ENCODE measurements at regions of chr1 and their contacts with region 1.

Region 1: DNA sequence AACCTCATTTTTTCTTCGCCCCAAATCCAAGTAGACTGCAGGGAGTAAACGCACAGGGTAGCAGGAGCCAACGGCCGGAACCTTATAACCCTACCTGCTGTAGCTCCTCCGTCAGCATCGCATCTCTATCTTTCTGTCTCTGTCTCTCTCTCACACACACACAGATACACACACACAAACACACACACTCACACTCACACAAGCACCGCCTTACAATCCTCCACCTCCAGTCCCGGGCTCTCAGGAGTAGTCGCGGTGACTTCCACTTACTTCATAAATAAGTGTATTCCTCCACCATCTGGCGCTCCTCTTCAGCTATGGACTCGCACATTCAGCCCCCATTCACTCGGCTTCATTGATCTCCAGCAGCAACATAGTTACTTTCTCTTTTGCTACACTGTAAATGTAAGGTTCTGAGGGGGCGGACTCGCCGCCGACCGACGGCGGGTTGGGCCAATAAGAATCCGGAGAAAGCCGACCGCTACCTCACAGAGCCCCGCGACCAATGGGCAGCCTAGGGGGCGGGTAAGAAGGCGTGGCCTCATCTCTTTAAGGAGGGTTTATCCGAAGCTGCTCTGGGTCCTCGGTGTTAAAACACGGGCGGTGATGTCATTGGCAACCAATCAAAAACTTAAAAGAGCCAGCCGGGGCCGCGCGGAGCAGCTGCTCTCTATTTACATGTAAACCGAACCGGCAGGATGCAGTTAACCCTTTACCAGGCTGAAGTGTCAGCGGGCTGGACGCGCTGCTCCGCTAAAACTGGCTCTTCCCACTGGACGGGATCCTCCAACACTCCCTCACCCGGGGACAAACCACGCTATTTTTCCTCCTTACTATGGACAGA is at the start of gene DUSP10:
- DNase-seq: peak; percentile 100
- H3K4me3 Mint-ChIP-seq: no peak within 1 kb of the TSS
- H3K27ac Mint-ChIP-seq: no peak within 1 kb of the TSS
- H3K4me1 Mint-ChIP-seq: peaks cover 34% of the 10 kb centered on the region
- H3K27me3 Mint-ChIP-seq: no peaks in the 10 kb centered on the region
- total RNA-seq, gene DUSP10: 13.5 and 14.6 TPM in 2 replicates

Region 2: GRCh38 chr1:221435504-221435904 is 306.4 kb before region 1 on chr1:
- intact Hi-C with region 1: loop called (anchors 2 kb)
- DNase-seq: peak; percentile 67
- H3K4me3 Mint-ChIP-seq: no peak overlapping the region
- H3K27ac Mint-ChIP-seq: no peak overlapping the region
- H3K4me1 Mint-ChIP-seq: peaks cover 22% of the 10 kb centered on the region
- H3K27me3 Mint-ChIP-seq: peaks cover 11% of the 10 kb centered on the region

Region 3: GRCh38 chr1:221573756-221574155 is 168.2 kb before region 1 on chr1:
- intact Hi-C with region 1: no loop called
- DNase-seq: no peak
- H3K4me3 Mint-ChIP-seq: no peak overlapping the region
- H3K27ac Mint-ChIP-seq: no peak overlapping the region
- H3K4me1 Mint-ChIP-seq: no peaks in the 10 kb centered on the region
- H3K27me3 Mint-ChIP-seq: peaks cover 7% of the 10 kb centered on the region

Region 4: DNA sequence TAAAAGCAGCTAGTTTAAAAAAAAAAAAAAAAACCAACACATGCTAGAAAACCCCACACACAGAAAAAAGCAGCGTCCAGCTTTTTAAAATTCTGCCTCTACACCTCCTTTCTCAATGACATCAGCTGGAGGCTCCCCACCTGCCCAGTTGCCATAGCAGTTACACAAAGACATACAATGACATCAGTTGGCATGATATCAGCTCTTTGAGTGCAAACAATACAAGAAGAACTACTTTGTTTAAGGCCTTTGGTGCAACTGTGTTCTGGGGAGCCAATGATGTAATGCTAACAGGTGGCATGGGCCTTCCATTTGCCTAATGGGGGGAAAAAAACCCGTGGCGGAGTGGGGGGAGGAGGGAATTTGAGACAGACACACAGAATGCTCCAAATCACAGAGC is 32.9 kb before region 1 on chr1:
- intact Hi-C with region 1: loop called (anchors 1 kb)
- DNase-seq: peak; percentile 85
- H3K4me3 Mint-ChIP-seq: peak overlapping the region; percentile 28
- H3K27ac Mint-ChIP-seq: peak overlapping the region; percentile 90
- H3K4me1 Mint-ChIP-seq: peaks cover 63% of the 10 kb centered on the region
- H3K27me3 Mint-ChIP-seq: no peaks in the 10 kb centered on the region

Region 5: DNA sequence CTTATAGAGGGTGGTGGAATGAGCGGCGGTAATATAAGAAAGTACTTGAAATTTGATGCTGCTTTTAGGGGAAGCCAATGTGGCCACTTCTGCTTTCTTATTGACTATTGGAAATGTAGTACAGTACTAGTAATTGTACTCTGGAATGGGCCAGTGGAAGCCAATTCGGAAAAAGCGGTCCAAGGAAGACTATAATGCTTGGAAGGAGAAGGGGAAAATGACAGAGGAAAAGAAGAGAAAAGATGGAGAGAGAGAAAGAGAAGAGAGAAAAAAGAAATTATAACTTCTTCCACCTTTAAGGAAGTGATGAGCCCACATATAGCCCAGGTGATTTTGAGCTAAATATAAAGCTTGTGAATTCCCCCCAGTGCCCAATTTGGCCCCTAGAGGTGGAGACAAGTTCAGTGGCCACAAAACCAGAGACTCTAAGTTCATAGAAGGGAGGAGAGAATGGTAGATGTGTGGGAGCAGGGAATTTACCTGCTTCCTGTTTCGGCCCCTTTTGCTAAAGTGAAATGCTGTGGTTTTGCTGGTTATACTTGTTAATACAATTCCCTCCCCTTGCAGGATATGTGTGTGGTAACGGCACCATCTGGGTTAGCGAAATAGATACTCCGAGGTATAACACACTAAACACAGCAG is 35.6 kb after region 1 on chr1:
- intact Hi-C with region 1: loop called (anchors 1 kb)
- DNase-seq: peak; percentile 87
- H3K4me3 Mint-ChIP-seq: peak overlapping the region; percentile 68
- H3K27ac Mint-ChIP-seq: peak overlapping the region; percentile 90
- H3K4me1 Mint-ChIP-seq: peaks cover 79% of the 10 kb centered on the region
- H3K27me3 Mint-ChIP-seq: no peaks in the 10 kb centered on the region

Region 6: DNA sequence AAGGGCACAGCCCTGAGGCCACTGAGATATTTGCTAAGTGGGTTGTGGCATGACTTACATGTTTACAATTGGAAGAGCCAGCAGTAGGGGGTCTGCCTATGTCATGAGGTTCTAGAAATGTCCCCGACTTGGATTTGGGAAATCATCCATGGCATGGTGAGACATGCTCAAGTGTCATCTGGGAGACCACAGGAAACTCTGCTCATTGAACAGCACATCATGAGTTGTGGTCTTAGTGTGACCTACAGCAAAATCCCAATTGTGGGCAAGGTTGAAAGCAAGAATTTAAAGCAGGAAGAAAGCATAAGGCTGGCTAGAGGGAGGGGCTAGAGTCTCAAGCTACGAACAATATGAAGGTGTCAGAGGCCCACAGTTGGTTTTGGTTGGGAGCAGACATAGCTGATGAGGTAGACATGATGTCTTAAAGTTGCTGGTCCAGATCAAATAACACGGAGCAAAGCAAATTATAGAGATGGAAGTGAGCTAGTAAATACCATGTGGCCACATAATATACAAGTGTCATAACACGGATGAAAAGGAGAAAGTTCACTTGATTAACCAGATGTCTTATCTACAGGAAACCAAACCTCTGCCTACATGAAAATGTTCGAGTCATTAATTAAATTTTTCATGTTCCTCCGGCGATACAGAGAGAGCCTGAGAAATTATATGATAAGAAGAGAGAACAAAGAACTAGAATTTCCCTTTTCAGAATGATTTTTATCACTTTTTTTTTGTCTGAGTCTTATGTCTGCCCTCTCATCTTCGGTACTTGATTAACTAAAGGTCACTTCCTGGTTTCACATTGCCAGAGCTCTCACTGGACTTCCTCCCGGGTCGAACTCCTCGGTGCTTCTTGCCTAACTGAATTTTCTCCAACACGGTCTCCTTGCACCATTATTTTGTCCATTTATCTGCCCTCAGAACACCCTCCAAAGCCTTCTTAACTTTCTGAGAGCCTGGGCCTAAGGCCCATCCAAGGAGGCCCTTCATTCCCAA is 67.4 kb after region 1 on chr1:
- intact Hi-C with region 1: no loop called
- DNase-seq: peak; percentile 54
- H3K4me3 Mint-ChIP-seq: peak overlapping the region; percentile 6
- H3K27ac Mint-ChIP-seq: peak overlapping the region; percentile 67
- H3K4me1 Mint-ChIP-seq: peaks cover 32% of the 10 kb centered on the region
- H3K27me3 Mint-ChIP-seq: no peaks in the 10 kb centered on the region

Region 7: GRCh38 chr1:221839796-221840395 is 98.0 kb after region 1 on chr1:
- intact Hi-C with region 1: loop called (anchors 1 kb)
- DNase-seq: peak; percentile 79
- H3K4me3 Mint-ChIP-seq: no peak overlapping the region
- H3K27ac Mint-ChIP-seq: peak overlapping the region; percentile 80
- H3K4me1 Mint-ChIP-seq: peaks cover 49% of the 10 kb centered on the region
- H3K27me3 Mint-ChIP-seq: no peaks in the 10 kb centered on the region

Region 8: DNA sequence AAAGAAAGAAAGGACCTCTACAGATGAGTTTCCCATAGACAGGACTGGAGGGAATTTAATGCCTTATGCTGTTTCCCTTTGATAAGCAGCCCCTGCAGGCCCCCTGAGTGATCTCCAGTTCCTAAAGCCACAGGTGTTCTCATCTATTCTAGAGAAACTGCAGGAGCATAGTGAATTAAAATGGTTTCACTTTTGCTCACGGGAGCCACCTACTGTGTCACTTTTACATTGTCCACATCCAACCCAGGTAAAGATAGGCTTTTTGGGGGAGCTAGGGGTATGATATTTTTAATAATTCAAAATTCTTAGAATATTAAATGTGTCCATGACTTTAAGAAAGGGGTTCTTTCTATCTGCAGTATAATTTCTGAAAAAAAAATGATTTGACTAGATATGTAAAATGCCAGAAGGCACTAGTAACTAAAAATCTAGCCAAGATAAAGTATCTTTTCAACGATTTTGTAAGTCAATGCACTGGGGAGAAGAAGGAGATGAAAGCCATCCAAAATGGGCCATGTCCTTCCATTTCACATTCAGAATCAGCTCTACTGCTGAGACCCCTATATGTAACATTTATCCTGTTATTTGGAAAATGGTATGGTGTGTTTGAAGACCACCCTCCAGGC is 267.3 kb after region 1 on chr1:
- intact Hi-C with region 1: loop called (anchors 1 kb)
- DNase-seq: peak; percentile 79
- H3K4me3 Mint-ChIP-seq: no peak overlapping the region
- H3K27ac Mint-ChIP-seq: no peak overlapping the region
- H3K4me1 Mint-ChIP-seq: no peaks in the 10 kb centered on the region
- H3K27me3 Mint-ChIP-seq: peaks cover 12% of the 10 kb centered on the region

Measured in activated CD4-positive, alpha-beta T cell treated with anti-CD3 and anti-CD28 coated beads, Interleukin-2, amount 10 ng/mL, durations not matched to agents 24 days and 14 days (primary cell).